ENCODE measurements at regions of chr19 and their contacts with region 1.

Region 1: GRCh38 chr19:12983542-12984142 is 11.6 kb upstream of the NFIX start:
- DNase-seq: peak; percentile 90

Region 2: DNA sequence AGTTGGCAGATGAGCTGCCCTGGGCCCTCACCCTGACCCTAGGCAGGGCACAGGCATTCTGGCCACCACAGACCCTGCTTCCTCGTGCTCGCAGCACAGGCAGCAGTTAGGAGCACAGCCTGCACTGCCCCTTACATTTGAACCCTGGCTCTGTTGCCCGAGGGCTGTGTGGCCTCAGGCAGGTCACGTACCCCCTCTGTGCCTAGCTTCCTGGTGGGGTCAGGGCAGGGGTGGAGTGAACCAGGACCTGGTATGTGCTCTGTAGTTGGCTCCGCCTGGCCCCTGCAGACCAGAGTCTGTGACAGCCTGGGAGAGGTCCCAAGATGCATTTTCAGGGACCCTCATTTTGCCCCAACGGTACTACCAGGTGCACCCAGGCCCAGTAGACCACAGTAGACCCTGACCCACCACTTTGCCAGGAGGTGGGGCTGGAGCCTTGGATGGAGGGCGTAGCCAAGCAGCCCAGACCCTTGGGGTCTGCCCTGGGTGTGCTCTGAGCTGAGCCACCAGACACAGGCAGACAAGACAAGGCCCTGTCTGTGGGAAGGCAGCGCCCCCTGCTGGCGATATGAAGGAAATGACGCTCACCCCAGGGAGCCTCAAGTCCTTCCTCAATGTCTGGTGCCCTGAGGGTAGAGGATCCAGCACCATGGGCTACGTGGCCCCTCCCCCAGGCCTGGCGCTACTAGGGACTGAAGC is 109.9 kb after region 1 on chr19:
- intact Hi-C with region 1: loop called (anchors 1 kb)
- DNase-seq: peak; percentile 94

Measured in cardiac septum (tissue), 1 donor.